ENCODE measurements at regions of chr6 and their contacts with region 1.

Region 1: GRCh38 chr6:71190809-71191208 is 97.8 kb upstream of the OGFRL1 start:
- DNase-seq: no peak
- ATAC-seq: no peak
- H3K4me3 Mint-ChIP-seq: no peak overlapping the region
- H3K27ac Mint-ChIP-seq: no peak overlapping the region
- H3K4me1 Mint-ChIP-seq: no peaks in the 10 kb centered on the region
- H3K27me3 Mint-ChIP-seq: peaks cover 1% of the 10 kb centered on the region
- CTCF ChIP-seq: no peak

Region 2: DNA sequence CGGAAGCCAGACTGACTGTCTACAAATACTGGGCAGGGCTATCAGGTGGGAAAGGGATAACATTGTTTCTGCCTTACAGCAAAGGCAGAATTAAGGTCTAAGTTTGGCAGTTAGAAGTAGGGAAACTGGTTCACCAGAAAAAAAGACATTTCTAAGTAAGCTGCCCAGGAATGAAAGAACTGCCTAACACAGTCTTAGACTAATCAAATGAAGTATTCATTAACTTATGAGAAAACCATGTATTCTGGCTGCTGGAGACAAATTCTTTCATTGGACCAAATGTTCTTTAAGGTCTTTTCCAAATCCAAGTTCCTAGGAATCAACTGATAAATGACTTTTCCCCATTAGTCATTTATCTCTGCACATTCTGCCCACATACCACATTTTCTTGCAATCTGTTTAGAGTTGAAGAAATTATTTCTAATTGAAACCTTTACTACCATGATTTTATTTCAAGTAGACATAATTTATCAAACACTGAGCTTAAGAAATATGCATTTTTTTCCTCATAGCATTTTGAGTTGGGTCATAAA is 22.5 kb before region 1 on chr6:
- CTCF ChIA-PET with region 1: no interaction called
- POLR2A ChIA-PET with region 1: no interaction called
- intact Hi-C with region 1: no loop called
- DNase-seq: no peak
- ATAC-seq: no peak
- H3K4me3 Mint-ChIP-seq: no peak overlapping the region
- H3K27ac Mint-ChIP-seq: no peak overlapping the region
- H3K4me1 Mint-ChIP-seq: no peaks in the 10 kb centered on the region
- H3K27me3 Mint-ChIP-seq: peaks cover under 1% of the 10 kb centered on the region
- CTCF ChIP-seq: no peak

Region 3: DNA sequence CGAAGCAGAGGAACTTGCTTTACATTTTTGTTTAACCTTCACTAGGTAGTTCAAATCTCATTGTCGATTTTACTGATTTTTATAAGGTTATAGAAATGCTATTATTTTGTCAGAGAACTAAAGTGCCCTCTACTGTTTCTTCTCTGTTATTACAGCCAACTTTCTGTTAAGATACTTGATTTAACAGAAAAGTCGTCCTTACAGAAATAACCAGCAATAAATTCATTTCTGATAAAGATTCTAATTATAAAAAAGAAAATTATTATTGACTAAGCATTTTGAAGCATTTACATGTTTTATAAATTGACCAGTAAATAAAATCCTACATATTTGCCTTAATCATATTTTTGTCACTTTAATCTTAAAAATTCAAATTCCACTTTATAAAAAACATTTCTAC is 158.6 kb after region 1 on chr6:
- CTCF ChIA-PET with region 1: interaction called, 28 read pairs
- POLR2A ChIA-PET with region 1: interaction called, 4 read pairs
- intact Hi-C with region 1: loop called (anchors 1 kb)
- DNase-seq: no peak
- ATAC-seq: no peak
- H3K4me3 Mint-ChIP-seq: no peak overlapping the region
- H3K27ac Mint-ChIP-seq: no peak overlapping the region
- H3K4me1 Mint-ChIP-seq: peaks cover 19% of the 10 kb centered on the region
- H3K27me3 Mint-ChIP-seq: peaks cover under 1% of the 10 kb centered on the region
- CTCF ChIP-seq: peak; percentile 54

Region 4: DNA sequence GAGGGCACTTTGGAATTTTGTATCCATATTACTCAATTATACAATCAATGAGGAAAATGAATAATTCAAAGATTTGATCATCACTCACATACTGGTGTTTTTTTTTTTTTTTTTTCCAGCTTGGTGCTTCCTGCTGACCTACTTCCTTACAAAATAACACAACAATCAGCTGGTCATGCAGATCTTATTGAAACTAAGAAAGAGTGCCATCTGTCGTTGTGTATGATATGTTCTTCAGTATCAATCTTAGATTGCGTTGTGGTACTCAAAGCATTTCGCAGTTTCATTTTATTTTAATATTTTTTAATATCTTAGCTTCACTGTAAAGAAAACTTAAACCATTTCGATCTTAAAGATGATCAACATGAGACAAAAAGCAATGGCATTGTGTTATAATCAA is 253.4 kb after region 1 on chr6:
- CTCF ChIA-PET with region 1: no interaction called
- POLR2A ChIA-PET with region 1: no interaction called
- intact Hi-C with region 1: no loop called
- DNase-seq: no peak
- ATAC-seq: no peak
- H3K4me3 Mint-ChIP-seq: no peak overlapping the region
- H3K27ac Mint-ChIP-seq: no peak overlapping the region
- H3K4me1 Mint-ChIP-seq: no peaks in the 10 kb centered on the region
- H3K27me3 Mint-ChIP-seq: no peaks in the 10 kb centered on the region
- CTCF ChIP-seq: no peak

Region 5: DNA sequence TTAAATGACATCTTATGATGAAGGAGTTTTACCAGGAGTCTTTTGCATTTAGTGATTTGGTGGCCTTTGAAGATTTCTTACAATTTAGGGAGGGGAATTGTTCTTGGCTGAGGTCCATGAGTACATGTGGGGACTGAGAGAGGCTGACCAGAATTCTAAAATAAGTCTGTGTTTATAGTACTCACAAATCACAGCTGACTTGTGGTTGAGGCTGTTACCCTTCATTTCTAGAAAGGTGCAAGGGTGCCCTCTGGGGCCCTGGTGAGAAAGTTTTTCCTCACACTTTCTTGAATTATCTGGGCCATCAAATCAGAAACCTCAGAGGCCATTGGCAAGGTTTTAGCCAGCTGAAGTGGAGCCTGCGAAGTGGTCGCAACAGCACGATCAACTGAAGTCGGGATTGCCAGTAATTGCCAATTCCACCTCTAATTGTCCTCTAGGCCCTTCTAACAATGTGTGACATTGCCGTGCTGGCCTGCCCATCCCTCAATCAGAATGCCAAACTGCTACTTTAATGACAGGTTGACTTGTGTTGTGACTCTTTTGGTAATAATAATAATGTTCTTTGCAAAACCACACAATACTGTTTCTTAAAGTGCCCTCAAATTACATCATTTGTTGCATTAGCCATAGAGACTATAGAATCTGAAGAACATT is 319.4 kb after region 1 on chr6:
- CTCF ChIA-PET with region 1: interaction called, 5 read pairs
- POLR2A ChIA-PET with region 1: no interaction called
- intact Hi-C with region 1: loop called (anchors 1 kb)
- DNase-seq: no peak
- ATAC-seq: no peak
- H3K4me3 Mint-ChIP-seq: no peak overlapping the region
- H3K27ac Mint-ChIP-seq: no peak overlapping the region
- H3K4me1 Mint-ChIP-seq: peaks cover 4% of the 10 kb centered on the region
- H3K27me3 Mint-ChIP-seq: peaks cover 3% of the 10 kb centered on the region
- CTCF ChIP-seq: no peak

Region 6: DNA sequence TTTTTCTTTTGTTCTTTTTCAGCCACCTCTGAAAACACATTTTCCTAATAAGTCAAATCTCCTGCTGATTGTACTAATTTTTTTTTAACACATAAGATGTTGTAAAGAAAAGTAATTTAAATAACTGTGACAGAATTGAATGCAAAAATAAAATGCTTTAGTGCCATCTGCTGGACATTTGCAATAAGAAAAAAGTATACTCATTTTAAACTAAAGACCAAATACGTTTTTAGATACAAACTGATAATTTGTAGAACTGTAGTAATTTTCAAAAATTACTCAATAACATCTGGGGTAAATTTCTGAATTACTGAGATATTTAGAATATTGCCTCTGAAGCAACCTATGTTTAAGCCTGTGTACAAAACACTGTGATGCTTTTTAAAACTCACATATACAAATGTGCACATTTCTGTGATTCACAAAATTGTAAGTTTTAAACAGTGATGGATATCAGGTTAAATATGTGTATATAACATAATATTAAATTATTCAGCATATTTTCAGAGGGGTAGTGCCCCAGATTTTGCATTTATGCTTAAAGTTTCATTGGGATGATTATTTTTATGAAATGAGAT is 894.3 kb after region 1 on chr6:
- CTCF ChIA-PET with region 1: no interaction called
- POLR2A ChIA-PET with region 1: no interaction called
- intact Hi-C with region 1: loop called (anchors 2 kb)
- DNase-seq: no peak
- ATAC-seq: no peak
- H3K4me3 Mint-ChIP-seq: no peak overlapping the region
- H3K27ac Mint-ChIP-seq: no peak overlapping the region
- H3K4me1 Mint-ChIP-seq: no peaks in the 10 kb centered on the region
- H3K27me3 Mint-ChIP-seq: peaks cover 3% of the 10 kb centered on the region
- CTCF ChIP-seq: no peak